Activated naive CD8-positive, alpha-beta T cell treated with anti-CD3 and anti-CD28 coated beads, Interleukin-2, amount 10 ng/mL, durations not matched to agents 7 days and 5 days (primary cell): ENCODE measurements at regions of chr9 and their contacts with region 1.

Region 1: GRCh38 chr9:88303721-88304451 is 84.4 kb upstream of the SPIN1 start:
- DNase-seq: peak; percentile 51
- ATAC-seq: peak; percentile 94
- H3K4me3 Mint-ChIP-seq: peak overlapping the region; percentile 86
- H3K27ac Mint-ChIP-seq: peak overlapping the region; percentile 97
- H3K4me1 Mint-ChIP-seq: peaks cover 42% of the 10 kb centered on the region
- H3K27me3 Mint-ChIP-seq: peaks cover 6% of the 10 kb centered on the region

Region 2: GRCh38 chr9:88322906-88323566 is 19.1 kb after region 1 on chr9:
- POLR2A ChIA-PET with region 1: interaction called, 33 read pairs
- DNase-seq: peak; percentile 63
- ATAC-seq: peak; percentile 97
- H3K4me3 Mint-ChIP-seq: peak overlapping the region; percentile 72
- H3K27ac Mint-ChIP-seq: peak overlapping the region; percentile 96
- H3K4me1 Mint-ChIP-seq: peaks cover 31% of the 10 kb centered on the region
- H3K27me3 Mint-ChIP-seq: peaks cover 3% of the 10 kb centered on the region

Region 3: DNA sequence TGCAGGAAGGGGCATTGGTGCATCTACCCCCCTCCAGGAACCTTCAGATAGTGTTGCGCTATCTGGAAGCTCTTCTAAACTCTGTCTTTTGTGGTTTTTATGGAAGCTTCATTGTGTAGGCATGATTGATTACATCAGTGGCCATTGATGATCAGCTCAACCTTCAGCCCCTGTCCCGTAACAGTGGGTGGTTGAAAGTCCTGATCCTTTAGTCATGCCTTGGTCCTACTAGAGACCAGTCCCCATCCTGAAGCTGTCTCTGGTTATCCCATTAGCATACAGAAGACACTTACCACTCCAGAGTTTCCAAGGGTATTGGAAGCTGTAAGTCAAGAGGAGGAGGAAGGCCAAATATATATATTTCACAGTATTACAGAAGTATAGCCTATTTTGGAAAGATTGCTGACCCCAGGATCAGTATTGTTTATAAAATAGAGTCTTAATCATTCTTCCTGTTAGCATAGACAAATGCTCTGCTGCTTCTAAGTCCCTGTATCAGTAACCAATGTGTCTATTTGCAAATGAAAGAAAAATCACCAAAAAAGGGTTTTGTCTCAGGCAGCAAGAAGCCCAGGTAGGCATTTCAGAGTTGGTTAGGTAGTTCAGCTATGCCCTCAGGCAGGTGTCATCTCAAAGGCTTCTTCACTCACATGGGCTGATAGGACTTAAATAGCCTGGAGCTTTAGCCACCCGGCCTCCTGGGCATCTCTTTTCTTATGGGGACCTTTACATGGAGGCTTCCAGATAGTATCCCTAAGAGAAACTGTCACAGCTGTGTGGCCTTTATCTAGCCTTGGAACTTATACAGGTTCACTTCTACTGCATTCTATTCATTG is 125.9 kb after region 1 on chr9:
- POLR2A ChIA-PET with region 1: no interaction called
- DNase-seq: no peak
- ATAC-seq: no peak
- H3K4me3 Mint-ChIP-seq: no peak overlapping the region
- H3K27ac Mint-ChIP-seq: no peak overlapping the region
- H3K4me1 Mint-ChIP-seq: peaks cover 18% of the 10 kb centered on the region
- H3K27me3 Mint-ChIP-seq: no peaks in the 10 kb centered on the region

Region 4: DNA sequence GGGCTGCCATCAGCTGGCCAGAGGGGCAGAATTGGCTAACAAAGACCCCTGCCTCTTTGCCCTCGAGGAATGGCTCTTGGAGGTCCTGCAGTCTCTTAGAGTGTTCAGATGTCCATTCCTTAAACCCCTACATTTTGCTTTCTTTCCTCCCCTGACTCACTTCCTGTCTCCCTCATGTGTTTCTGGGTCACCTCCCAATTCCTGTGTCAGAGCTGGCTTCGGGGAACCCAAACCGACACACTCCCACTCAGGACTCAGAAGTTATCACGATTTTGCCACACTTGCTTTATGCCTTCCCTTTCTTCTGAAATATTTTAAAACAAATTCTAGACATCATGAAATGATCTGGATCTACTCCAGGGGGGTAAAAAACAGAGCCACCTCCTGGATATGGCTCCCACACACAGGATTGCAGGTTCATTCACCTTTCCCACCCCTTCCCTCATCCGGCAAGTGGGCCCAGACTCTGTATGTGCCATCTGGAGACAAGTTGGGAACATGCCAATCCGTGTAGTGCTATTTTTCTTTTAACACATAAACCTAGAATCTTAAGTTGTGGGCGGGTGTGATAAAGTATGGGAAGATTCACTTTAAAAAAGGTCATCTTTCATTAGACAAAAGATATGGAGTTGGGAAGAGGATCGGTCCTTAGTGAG is 376.7 kb after region 1 on chr9:
- POLR2A ChIA-PET with region 1: no interaction called
- DNase-seq: no peak
- ATAC-seq: no peak
- H3K4me3 Mint-ChIP-seq: no peak overlapping the region
- H3K27ac Mint-ChIP-seq: no peak overlapping the region
- H3K4me1 Mint-ChIP-seq: no peaks in the 10 kb centered on the region
- H3K27me3 Mint-ChIP-seq: peaks cover 3% of the 10 kb centered on the region

Region 5: GRCh38 chr9:88814577-88814976 is 510.7 kb after region 1 on chr9:
- POLR2A ChIA-PET with region 1: no interaction called
- DNase-seq: no peak
- ATAC-seq: no peak
- H3K4me3 Mint-ChIP-seq: no peak overlapping the region
- H3K27ac Mint-ChIP-seq: no peak overlapping the region
- H3K4me1 Mint-ChIP-seq: no peaks in the 10 kb centered on the region
- H3K27me3 Mint-ChIP-seq: peaks cover 17% of the 10 kb centered on the region